ENCODE measurements at regions of chr1 and their contacts with region 1.

Region 1: DNA sequence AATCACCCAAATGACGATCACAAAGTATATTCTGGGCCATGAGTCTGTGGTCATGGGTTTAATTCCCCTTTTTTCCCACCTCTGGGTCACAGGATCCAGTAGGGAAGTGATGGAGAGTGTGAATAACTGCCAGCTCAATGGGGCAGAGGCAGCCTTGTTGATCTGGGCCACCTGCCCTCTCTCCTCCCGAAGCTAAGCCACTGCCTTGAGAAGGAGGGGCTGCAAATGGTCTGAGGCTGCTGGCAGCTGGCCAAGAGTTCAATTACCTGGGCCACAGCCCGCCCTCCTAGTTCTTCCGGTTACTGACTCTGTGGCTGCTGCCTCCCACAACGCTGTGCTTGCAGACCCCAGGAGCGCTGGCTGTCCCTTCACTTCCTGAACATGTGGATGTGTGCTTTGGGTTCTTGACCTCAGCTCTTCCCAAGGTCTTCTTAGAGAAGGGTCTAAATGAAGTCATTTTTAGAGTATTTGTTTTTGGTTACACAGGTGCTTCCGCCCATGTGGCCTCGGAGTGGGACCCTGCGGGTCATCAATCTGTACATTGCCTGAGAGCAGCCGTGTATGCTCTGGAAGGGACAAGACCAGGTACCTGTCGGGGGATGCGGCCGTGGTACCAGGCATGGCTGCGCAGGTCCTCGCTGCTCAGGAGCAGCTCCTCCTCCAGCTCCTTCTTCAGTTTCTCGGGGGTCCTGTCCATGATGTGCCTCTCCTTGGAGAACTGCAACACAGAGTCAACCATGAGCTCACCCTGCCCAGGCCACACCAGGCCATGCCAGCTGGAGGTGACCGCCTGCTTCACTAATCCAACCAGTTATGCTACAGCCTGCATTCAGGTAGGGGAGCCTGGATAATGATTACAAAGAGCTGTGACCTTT is 89.7 kb downstream of the BCAR3 start:
- ATAC-seq: peak in 5 of 8 experiments; percentile 70 to 89 (median 76)
- H3K4me3 ChIP-seq: no peak overlapping the region
- H3K27ac ChIP-seq: peak overlapping the region in 1 of 2 donors; percentile 8
- H3K4me1 ChIP-seq: peaks cover 31 to 37% of the 10 kb centered on the region in 2 donors

Region 2: GRCh38 chr1:93304716-93305138 is 287.2 kb before region 1 on chr1:
- in situ Hi-C with region 1: loop called in 1 of 9 experiments (anchors 25 kb)
- ATAC-seq: peak in 4 of 8 experiments; percentile 43 to 65 (median 54)
- H3K4me3 ChIP-seq: no peak overlapping the region
- H3K27ac ChIP-seq: no peak overlapping the region
- H3K4me1 ChIP-seq: no peaks in the 10 kb centered on the region

Region 3: GRCh38 chr1:93442008-93442666 is 149.8 kb before region 1 on chr1:
- in situ Hi-C with region 1: no loop called
- ATAC-seq: peak in 5 of 8 experiments; percentile 39 to 77 (median 52)
- H3K4me3 ChIP-seq: no peak overlapping the region
- H3K27ac ChIP-seq: no peak overlapping the region
- H3K4me1 ChIP-seq: peaks cover 0 to 6% of the 10 kb centered on the region in 2 donors

Region 4: DNA sequence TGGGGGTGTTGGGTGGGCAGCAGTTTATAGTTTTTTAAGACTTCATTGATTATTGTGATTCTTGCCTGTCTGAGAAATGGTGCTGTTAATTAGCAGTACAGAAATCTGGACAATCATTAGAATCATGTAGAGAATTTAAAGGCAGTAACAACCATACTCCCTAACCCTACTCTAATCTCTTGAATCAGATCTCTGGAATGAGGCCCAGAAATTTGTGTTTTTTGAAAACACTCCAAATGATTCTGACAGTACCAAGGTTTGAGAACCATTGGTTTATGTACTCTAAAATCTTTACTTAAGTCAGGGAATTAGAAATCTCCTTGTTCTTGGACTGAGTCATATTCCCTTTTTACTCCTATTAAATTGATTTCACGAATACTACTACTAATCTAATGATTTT is 120.0 kb before region 1 on chr1:
- in situ Hi-C with region 1: loop called in 1 of 9 experiments (anchors 25 kb)
- ATAC-seq: no peak
- H3K4me3 ChIP-seq: no peak overlapping the region
- H3K27ac ChIP-seq: no peak overlapping the region
- H3K4me1 ChIP-seq: no peaks in the 10 kb centered on the region

Measured in motor neuron (in vitro differentiated cells).